Panc1 (cell line): ENCODE measurements at regions of chr10 and their contacts with region 1.

Region 1: GRCh38 chr10:3043512-3044368 is 23.6 kb upstream of the PFKP start:
- DNase-seq: peak; percentile 25
- ATAC-seq: peak; percentile 94
- H3K4me3 ChIP-seq: no peak overlapping the region
- H3K27ac ChIP-seq: no peak overlapping the region
- H3K4me1 ChIP-seq: peaks cover 11% of the 10 kb centered on the region
- H3K27me3 ChIP-seq: no peaks in the 10 kb centered on the region
- CTCF ChIP-seq: peak; percentile 81

Region 2: GRCh38 chr10:2927958-2928840 is 115.5 kb before region 1 on chr10:
- CTCF ChIA-PET with region 1: interaction called, 8 read pairs
- POLR2A ChIA-PET with region 1: no interaction called
- in situ Hi-C with region 1: no loop called
- intact Hi-C with region 1: loop called (anchors 2 kb)
- DNase-seq: peak; percentile 20
- ATAC-seq: peak; percentile 85
- H3K4me3 ChIP-seq: no peak overlapping the region
- H3K27ac ChIP-seq: no peak overlapping the region
- H3K4me1 ChIP-seq: no peaks in the 10 kb centered on the region
- H3K27me3 ChIP-seq: no peaks in the 10 kb centered on the region; the same call in 1 of the 2 replicates
- CTCF ChIP-seq: peak; percentile 79

Region 3: DNA sequence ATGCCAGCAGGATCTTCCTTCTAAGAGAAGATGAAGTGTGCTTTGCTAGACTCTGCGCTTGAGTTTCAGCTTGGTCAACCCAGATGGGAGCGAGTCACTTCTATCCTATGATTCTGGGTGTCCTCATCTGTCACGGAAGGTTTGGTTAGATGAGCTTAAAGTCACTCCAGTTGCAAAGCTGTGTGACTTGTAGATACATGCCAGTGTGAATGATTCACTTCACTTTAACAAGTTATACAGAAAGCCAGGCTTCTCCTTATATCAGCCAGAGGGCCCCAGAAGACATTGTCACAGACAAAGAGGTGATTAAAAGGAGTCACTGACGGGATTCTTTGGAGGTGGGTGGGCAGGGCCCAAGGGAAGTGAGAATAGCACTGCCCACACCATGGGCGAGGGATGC is 99.0 kb before region 1 on chr10:
- CTCF ChIA-PET with region 1: no interaction called
- POLR2A ChIA-PET with region 1: no interaction called
- in situ Hi-C with region 1: no loop called
- intact Hi-C with region 1: loop called (anchors 5 kb)
- DNase-seq: no peak
- ATAC-seq: no peak
- H3K4me3 ChIP-seq: no peak overlapping the region
- H3K27ac ChIP-seq: no peak overlapping the region
- H3K4me1 ChIP-seq: no peaks in the 10 kb centered on the region
- H3K27me3 ChIP-seq: peaks cover under 1% of the 10 kb centered on the region; the same call in 1 of the 2 replicates
- CTCF ChIP-seq: no peak

Region 4: GRCh38 chr10:3068968-3069677 is 25.4 kb after region 1 on chr10:
- CTCF ChIA-PET with region 1: no interaction called
- POLR2A ChIA-PET with region 1: no interaction called
- in situ Hi-C with region 1: no loop called
- intact Hi-C with region 1: no loop called
- DNase-seq: no peak
- ATAC-seq: peak; percentile 6; the same call in 1 of the 2 replicates
- H3K4me3 ChIP-seq: peak overlapping the region; percentile 67 to 80
- H3K27ac ChIP-seq: peak overlapping the region; percentile 78
- H3K4me1 ChIP-seq: peaks cover 39% of the 10 kb centered on the region
- H3K27me3 ChIP-seq: no peaks in the 10 kb centered on the region
- CTCF ChIP-seq: no peak